ENCODE measurements at regions of chr1 and their contacts with region 1.

Region 1: DNA sequence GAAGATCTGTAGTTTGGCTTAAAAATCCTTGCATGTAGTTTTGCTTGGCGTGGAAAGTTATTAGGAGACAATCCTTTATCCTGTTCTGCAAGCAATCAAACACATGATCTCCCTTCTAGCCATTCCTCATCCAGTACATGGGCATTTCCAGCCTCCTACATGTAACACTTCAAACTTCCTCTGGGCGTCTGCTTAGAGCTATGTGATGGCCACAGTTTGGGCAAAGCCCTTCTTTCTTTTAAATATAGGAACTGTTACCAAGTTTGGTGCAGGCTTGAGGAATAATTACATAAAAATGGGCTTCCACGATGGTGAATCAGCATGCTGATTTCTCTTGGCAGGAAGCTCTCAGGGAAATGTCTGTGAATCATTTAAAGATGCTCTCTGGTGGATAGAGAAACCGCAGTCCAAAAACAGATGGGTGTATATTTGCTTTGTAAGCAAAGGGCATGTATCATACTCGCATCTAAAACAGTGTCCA is 176.9 kb upstream of the FMN2 start:
- DNase-seq: no peak
- H3K4me3 ChIP-seq: no peak overlapping the region
- H3K27ac ChIP-seq: no peak overlapping the region
- H3K4me1 ChIP-seq: no peaks in the 10 kb centered on the region
- H3K27me3 ChIP-seq: no peaks in the 10 kb centered on the region
- CTCF ChIP-seq: no peak
- POLR2A ChIP-seq: no peak

Region 2: GRCh38 chr1:239061770-239062169 is 853.0 kb before region 1 on chr1:
- intact Hi-C with region 1: loop called (anchors 10 kb)
- DNase-seq: no peak
- H3K4me3 ChIP-seq: no peak overlapping the region
- H3K27ac ChIP-seq: no peak overlapping the region
- H3K4me1 ChIP-seq: no peaks in the 10 kb centered on the region
- H3K27me3 ChIP-seq: no peaks in the 10 kb centered on the region
- CTCF ChIP-seq: no peak
- POLR2A ChIP-seq: no peak